ENCODE measurements at regions of chr2 and their contacts with region 1.

Region 1: GRCh38 chr2:236168110-236169067 is at the start of gene GBX2:
- DNase-seq: peak; percentile 80
- ATAC-seq: peak; percentile 78
- H3K4me3 ChIP-seq: peak within 1 kb of the TSS; percentile 61 to 93
- H3K27ac ChIP-seq: peak within 1 kb of the TSS; percentile 87
- H3K4me1 ChIP-seq: peaks cover 0 to 26% of the 10 kb centered on the region in 2 experiments; a peak in 1 of 4 replicates
- H3K27me3 ChIP-seq: no peaks in the 10 kb centered on the region
- CTCF ChIP-seq: no peak
- POLR2A ChIP-seq: peak; percentile 56
- RAD21 ChIP-seq: no peak
- total RNA-seq, gene GBX2: 5.9 TPM

Region 2: GRCh38 chr2:236143811-236144210 is 24.6 kb before region 1 on chr2:
- CTCF ChIA-PET with region 1: interaction called, 10 read pairs
- POLR2A ChIA-PET with region 1: no interaction called
- RAD21 ChIA-PET with region 1: no interaction called
- intact Hi-C with region 1: no loop called
- DNase-seq: no peak
- ATAC-seq: no peak
- H3K4me3 ChIP-seq: no peak overlapping the region
- H3K27ac ChIP-seq: no peak overlapping the region
- H3K4me1 ChIP-seq: peaks cover 5 to 8% of the 10 kb centered on the region in 2 experiments; a peak in 3 of 4 replicates
- H3K27me3 ChIP-seq: no peaks in the 10 kb centered on the region
- CTCF ChIP-seq: no peak
- POLR2A ChIP-seq: no peak
- RAD21 ChIP-seq: no peak